ENCODE measurements at regions of chr16 and their contacts with region 1.

Region 1: DNA sequence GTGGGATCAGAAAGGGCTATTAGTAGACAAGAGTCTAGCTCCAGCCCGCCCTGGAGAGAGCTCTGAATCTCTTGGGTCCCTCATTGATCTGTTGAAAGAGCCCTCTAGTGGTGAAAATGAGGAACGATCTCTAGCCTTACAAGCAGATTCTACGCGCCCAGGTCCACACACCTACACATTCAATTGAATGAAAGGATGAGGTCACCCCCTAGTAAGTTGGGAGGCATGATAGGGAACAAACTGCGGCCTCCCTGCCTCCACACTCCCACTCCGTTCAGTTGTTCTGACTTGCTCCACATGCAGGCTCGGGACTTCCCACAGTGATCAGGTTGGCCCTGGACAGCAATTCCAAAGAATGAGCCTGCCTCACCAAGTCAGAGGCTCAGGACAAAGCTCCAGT is 2.9 kb upstream of the CACNG3 start:
- DNase-seq: no peak
- H3K4me3 ChIP-seq: no peak overlapping the region
- H3K27ac ChIP-seq: no peak overlapping the region
- H3K4me1 ChIP-seq: peaks cover 0 to 5% (median 0%) of the 10 kb centered on the region in 4 donors
- H3K27me3 ChIP-seq: peaks cover 5 to 52% (median 33%) of the 10 kb centered on the region in 3 donors
- CTCF ChIP-seq: peak in 3 of 4 experiments; percentile 31 to 64 (median 39)
- EP300 ChIP-seq: no peak
- POLR2A ChIP-seq: no peak

Region 2: DNA sequence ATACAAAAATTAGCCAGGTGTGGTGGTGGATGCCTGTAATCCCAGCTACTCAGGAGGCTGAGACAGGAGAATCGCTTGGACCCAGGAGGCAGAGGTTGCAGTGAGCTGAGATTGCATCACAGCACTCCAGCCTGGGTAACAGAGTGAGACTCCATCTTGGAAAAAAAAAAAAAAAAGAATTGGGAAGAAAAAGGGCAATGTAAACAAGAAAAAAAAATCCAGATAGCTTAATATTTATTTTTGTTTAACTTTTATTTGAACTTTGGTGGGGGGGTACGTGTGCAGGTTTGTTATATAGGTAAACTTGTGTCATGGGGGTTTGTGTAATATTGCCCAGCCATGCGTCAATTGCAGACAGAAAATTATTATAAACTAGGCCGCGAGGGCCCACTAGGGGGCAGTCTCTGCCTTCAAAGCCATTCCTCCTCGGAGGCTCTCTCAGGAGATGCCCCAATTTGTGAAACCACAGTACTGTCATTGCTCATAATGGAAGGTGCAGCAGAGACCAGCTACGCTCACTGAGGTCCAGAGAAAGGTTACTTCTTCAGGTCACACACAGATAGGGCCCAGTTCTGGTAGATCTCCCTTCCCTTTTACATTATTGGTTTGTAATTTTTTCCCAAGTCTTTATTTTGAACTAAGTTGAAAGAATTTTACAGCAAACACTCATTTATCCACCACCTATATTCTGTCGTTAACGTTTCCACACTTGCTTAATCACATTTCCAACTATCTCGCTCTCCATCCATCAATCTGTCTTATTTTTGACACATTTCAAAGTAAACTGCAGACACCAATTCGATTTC is 211.2 kb before region 1 on chr16:
- intact Hi-C with region 1: loop called (anchors 5 kb)
- DNase-seq: no peak
- H3K4me3 ChIP-seq: no peak overlapping the region
- H3K27ac ChIP-seq: no peak overlapping the region
- H3K4me1 ChIP-seq: no peaks in the 10 kb centered on the region
- H3K27me3 ChIP-seq: no peaks in the 10 kb centered on the region
- CTCF ChIP-seq: peak in 3 of 4 experiments; percentile 47 to 67 (median 49)
- EP300 ChIP-seq: no peak
- POLR2A ChIP-seq: no peak

Region 3: DNA sequence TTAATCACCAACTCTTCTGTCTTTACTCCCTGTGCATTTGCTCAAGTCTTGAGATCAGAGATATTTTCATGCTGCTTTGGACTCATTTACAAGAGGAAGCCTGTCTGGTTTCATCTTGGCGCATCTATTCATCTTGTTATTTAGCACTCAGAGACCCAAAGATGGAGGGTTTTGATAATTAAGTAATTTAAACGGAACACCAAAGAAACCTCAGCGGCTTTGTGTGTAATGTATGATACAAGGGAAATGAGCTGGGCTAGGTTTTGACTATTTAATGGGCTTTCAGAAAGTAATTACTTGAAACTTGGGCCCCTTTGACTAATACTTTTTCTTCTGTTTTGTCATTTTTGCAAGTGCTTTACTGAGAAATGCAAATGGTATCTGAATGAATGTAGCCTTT is 63.3 kb before region 1 on chr16:
- intact Hi-C with region 1: no loop called
- DNase-seq: no peak
- H3K4me3 ChIP-seq: no peak overlapping the region
- H3K27ac ChIP-seq: no peak overlapping the region
- H3K4me1 ChIP-seq: no peaks in the 10 kb centered on the region
- H3K27me3 ChIP-seq: no peaks in the 10 kb centered on the region
- CTCF ChIP-seq: no peak
- EP300 ChIP-seq: no peak
- POLR2A ChIP-seq: no peak

Region 4: GRCh38 chr16:24516900-24517669 is 263.9 kb after region 1 on chr16:
- intact Hi-C with region 1: no loop called
- DNase-seq: peak; percentile 90
- H3K4me3 ChIP-seq: peak overlapping the region in 3 of 4 donors; percentile 14 to 28 (median 24)
- H3K27ac ChIP-seq: peak overlapping the region in 3 of 4 donors; percentile 25 to 41 (median 25)
- H3K4me1 ChIP-seq: peaks cover 0 to 3% (median 0%) of the 10 kb centered on the region in 4 donors
- H3K27me3 ChIP-seq: no peaks in the 10 kb centered on the region
- CTCF ChIP-seq: peak; percentile 76 to 91 (median 82)
- EP300 ChIP-seq: no peak
- POLR2A ChIP-seq: no peak

Measured in sigmoid colon (tissue), 7 donors.